ENCODE measurements at regions of chr10 and their contacts with region 1.

Region 1: DNA sequence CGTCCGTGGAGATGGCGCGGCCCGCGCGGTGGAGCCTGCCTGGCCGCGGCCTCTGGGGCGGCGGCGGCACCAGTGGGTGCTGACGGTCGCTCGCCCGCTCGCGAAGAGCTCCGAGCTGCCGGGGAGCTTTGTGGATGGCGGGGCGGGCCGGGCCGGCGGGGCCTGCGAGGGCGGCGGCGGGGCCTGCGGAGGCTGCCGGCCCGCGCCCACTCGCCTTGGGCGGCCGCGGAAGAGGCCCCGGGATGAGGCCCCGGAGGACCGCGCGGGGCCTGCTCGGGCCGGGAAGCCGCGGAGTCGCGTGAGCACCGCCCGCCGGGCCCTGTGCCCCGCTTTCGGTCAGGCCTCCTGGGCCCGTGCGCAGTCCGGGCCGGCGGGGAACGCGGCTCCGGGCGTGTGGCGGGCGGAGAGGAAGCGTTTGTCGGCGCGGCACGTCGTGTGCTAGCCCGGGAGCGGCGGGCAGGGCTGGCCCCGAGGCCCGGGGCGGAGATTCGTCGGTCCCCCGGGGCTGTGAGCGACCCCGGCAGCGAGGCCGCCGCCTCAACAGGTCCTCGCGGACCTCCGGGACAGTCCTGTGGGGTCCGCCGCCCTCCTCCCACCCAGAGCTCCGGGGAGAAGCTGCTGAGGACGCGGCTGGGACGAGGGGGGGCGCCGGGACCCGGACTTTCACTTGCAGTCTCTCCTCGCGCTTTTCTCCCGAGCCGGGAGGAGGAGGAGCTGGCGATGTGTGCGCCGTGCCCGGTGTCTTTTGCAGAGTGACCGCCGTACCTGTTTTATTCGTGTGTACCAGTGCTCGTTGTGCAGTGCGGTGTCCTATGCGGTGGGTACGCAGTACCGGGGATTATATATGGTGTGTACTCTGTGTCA is 578 bp downstream of the ZMYND11 start:
- DNase-seq: peak; percentile 64
- H3K4me3 ChIP-seq: peak overlapping the region; percentile 42 to 96 (median 51)
- H3K27ac ChIP-seq: peak overlapping the region; percentile 74
- H3K4me1 ChIP-seq: peaks cover 35% of the 10 kb centered on the region
- H3K27me3 ChIP-seq: no peaks in the 10 kb centered on the region
- CTCF ChIP-seq: no peak
- POLR2A ChIP-seq: peak; percentile 17

Region 2: DNA sequence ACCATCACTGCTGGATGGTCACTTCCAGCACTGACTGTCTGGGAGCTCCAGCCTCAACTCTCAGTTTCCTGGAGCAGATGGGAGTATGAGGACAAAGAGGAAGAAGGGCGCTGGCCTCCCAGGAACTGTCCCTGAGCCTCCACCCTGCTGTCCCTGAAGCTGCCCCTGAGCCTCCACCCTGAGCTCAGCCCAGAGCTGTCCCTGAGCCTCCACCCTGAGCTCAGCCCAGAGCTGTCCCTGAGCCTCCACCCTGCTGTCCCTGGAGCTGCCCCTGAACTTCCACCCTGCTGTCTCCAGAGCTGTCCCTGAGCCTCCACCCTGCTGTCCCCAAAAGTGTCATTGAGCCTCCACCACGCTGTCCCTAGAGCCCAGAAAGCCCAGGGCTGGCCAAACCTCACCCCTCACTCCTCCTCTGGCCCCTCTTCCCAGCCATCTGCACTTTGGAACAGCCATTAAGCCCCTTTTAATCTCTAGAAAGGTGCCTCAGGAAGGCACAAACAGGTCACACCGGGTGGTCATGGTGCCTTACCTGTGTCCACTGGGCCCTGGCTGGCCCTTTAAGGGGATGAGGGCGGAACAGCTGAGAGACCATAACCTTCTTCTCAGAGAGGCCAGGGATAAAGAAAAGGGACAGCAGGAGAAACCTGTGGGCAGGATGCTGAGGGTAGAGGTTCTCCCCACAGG is 56.2 kb before region 1 on chr10:
- CTCF ChIA-PET with region 1: interaction called, 8 read pairs
- POLR2A ChIA-PET with region 1: no interaction called
- dilution Hi-C with region 1: no loop called
- intact Hi-C with region 1: loop called (anchors 2 kb)
- DNase-seq: no peak
- H3K4me3 ChIP-seq: no peak overlapping the region
- H3K27ac ChIP-seq: no peak overlapping the region
- H3K4me1 ChIP-seq: no peaks in the 10 kb centered on the region
- H3K27me3 ChIP-seq: no peaks in the 10 kb centered on the region
- CTCF ChIP-seq: no peak
- POLR2A ChIP-seq: no peak

Region 3: GRCh38 chr10:106740-107139 is 29.1 kb before region 1 on chr10:
- CTCF ChIA-PET with region 1: no interaction called
- POLR2A ChIA-PET with region 1: no interaction called
- dilution Hi-C with region 1: no loop called
- intact Hi-C with region 1: no loop called
- DNase-seq: no peak
- H3K4me3 ChIP-seq: no peak overlapping the region
- H3K27ac ChIP-seq: no peak overlapping the region
- H3K4me1 ChIP-seq: no peaks in the 10 kb centered on the region
- H3K27me3 ChIP-seq: peaks cover 0 to 8% of the 10 kb centered on the region in 2 experiments
- CTCF ChIP-seq: no peak
- POLR2A ChIP-seq: no peak

Region 4: GRCh38 chr10:201328-201771 is 65.5 kb after region 1 on chr10:
- CTCF ChIA-PET with region 1: no interaction called
- POLR2A ChIA-PET with region 1: no interaction called
- dilution Hi-C with region 1: no loop called
- intact Hi-C with region 1: loop called (anchors 5 kb)
- DNase-seq: peak; percentile 81
- H3K4me3 ChIP-seq: peak overlapping the region in 1 of 3 experiments; percentile 6
- H3K27ac ChIP-seq: peak overlapping the region; percentile 80
- H3K4me1 ChIP-seq: peaks cover 22% of the 10 kb centered on the region
- H3K27me3 ChIP-seq: no peaks in the 10 kb centered on the region
- CTCF ChIP-seq: no peak
- POLR2A ChIP-seq: no peak

Region 5: GRCh38 chr10:416091-416515 is 280.3 kb after region 1 on chr10:
- CTCF ChIA-PET with region 1: no interaction called
- POLR2A ChIA-PET with region 1: no interaction called
- dilution Hi-C with region 1: no loop called
- intact Hi-C with region 1: no loop called
- DNase-seq: no peak
- H3K4me3 ChIP-seq: no peak overlapping the region
- H3K27ac ChIP-seq: no peak overlapping the region
- H3K4me1 ChIP-seq: peaks cover 9% of the 10 kb centered on the region
- H3K27me3 ChIP-seq: no peaks in the 10 kb centered on the region
- CTCF ChIP-seq: no peak
- POLR2A ChIP-seq: no peak

Measured in endothelial cell of umbilical vein (primary cell).